AG04450 (cell line): ENCODE measurements at regions of chr22 and their contacts with region 1.

Region 1: GRCh38 chr22:35350539-35351503 is 30.1 kb upstream of the HMOX1 start:
- DNase-seq: peak; percentile 85
- H3K4me3 ChIP-seq: peak overlapping the region; percentile 67
- H3K27ac ChIP-seq: peak overlapping the region; percentile 48
- H3K27me3 ChIP-seq: no peaks in the 10 kb centered on the region
- CTCF ChIP-seq: peak; percentile 74

Region 2: GRCh38 chr22:35116817-35117216 is 234.0 kb before region 1 on chr22:
- CTCF ChIA-PET with region 1: no interaction called
- POLR2A ChIA-PET with region 1: no interaction called
- DNase-seq: no peak
- H3K4me3 ChIP-seq: no peak overlapping the region
- H3K27ac ChIP-seq: no peak overlapping the region
- H3K27me3 ChIP-seq: no peaks in the 10 kb centered on the region
- CTCF ChIP-seq: no peak

Region 3: GRCh38 chr22:35257321-35258190 is 93.3 kb before region 1 on chr22 and contains the start of gene HMGXB4:
- CTCF ChIA-PET with region 1: no interaction called
- POLR2A ChIA-PET with region 1: no interaction called
- DNase-seq: peak; percentile 73
- H3K4me3 ChIP-seq: peak within 1 kb of the TSS; percentile 78
- H3K27ac ChIP-seq: peak within 1 kb of the TSS; percentile 47
- H3K27me3 ChIP-seq: no peaks in the 10 kb centered on the region
- CTCF ChIP-seq: no peak
- polyA plus RNA-seq, gene HMGXB4: 22.1 and 30.4 TPM in 2 replicates

Region 4: DNA sequence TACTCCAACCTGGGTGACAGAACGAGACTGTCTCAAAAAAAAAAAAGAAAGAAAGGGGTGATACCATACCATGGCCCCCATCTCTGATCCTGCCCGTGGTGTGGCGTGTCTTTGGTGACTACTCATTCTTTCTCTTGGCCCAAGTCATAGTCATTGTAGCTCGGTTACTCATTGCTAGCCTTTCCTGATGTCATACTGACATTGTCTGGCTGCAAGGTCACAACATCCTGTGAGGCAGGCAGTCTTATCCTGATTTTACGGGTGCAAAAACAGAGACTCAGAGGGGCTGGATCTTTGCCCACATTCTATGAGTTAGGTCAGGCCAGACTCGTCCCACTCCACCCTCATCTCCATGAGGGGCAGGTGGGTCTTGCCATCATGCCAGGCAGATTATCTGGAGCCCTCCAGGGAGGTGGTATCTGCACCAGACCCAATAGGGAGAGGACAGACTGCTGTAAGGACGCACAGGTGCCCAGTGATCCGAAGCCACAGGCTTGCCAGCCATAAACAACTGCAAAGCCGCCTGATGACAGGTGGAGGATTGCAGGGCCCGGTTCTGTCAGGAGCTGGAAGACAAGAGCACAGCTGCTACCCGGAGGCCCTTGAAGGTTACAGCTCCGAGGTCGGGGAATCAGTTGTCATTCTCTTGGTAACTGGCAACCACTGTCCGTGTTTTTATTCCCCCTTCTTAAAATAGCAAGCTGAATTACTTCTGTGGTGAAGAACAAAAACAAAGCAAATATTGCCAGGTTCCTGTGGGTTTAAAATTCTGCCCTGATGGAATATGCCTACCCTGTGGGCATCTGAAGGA is 37.3 kb before region 1 on chr22:
- CTCF ChIA-PET with region 1: no interaction called
- POLR2A ChIA-PET with region 1: no interaction called
- DNase-seq: peak; percentile 26
- H3K4me3 ChIP-seq: no peak overlapping the region
- H3K27ac ChIP-seq: peak overlapping the region; percentile 52
- H3K27me3 ChIP-seq: no peaks in the 10 kb centered on the region
- CTCF ChIP-seq: no peak

Region 5: DNA sequence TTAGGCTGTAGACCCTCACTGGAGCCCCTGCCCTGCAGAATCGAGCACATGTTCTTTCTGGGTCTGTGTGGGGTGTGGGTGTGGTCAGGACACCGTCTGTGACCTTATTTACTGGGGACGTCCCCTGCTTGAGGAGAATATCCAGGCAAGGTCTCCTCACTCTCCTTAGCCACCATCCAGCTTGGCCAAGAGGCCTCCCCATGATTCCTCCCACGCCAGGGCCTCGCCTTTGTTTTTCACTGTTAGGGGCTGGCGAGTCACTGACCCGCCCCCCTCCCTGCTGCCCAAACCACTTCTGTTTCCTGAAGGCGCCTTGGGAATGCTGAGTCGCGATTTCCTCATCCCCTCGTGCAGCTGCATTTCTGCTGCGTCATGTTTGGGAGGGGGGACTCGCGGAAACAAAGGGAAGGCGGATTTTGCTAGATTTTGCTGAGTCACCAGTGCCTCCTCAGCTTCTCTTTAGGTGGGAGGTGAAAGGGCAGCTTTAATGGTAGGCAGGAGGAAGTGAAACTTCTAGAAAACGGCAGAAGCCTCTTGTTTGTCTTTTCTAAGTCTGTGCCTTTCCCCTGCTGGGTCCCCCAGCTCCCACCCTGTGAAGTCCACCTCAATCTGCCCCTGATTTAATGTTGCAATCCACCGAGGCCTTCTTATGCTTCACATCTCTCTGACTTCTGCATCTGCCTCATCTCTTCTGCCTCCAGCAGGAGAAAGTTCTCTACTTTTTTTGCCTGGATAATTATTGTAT is 26.1 kb after region 1 on chr22:
- CTCF ChIA-PET with region 1: no interaction called
- POLR2A ChIA-PET with region 1: interaction called, 20 read pairs
- DNase-seq: peak; percentile 97
- H3K4me3 ChIP-seq: no peak overlapping the region
- H3K27ac ChIP-seq: peak overlapping the region; percentile 94
- H3K27me3 ChIP-seq: no peaks in the 10 kb centered on the region
- CTCF ChIP-seq: no peak

Region 6: GRCh38 chr22:35437038-35437437 is 86.2 kb after region 1 on chr22:
- CTCF ChIA-PET with region 1: no interaction called
- POLR2A ChIA-PET with region 1: no interaction called
- DNase-seq: no peak
- H3K4me3 ChIP-seq: no peak overlapping the region
- H3K27ac ChIP-seq: no peak overlapping the region
- H3K27me3 ChIP-seq: no peaks in the 10 kb centered on the region
- CTCF ChIP-seq: no peak

Region 7: DNA sequence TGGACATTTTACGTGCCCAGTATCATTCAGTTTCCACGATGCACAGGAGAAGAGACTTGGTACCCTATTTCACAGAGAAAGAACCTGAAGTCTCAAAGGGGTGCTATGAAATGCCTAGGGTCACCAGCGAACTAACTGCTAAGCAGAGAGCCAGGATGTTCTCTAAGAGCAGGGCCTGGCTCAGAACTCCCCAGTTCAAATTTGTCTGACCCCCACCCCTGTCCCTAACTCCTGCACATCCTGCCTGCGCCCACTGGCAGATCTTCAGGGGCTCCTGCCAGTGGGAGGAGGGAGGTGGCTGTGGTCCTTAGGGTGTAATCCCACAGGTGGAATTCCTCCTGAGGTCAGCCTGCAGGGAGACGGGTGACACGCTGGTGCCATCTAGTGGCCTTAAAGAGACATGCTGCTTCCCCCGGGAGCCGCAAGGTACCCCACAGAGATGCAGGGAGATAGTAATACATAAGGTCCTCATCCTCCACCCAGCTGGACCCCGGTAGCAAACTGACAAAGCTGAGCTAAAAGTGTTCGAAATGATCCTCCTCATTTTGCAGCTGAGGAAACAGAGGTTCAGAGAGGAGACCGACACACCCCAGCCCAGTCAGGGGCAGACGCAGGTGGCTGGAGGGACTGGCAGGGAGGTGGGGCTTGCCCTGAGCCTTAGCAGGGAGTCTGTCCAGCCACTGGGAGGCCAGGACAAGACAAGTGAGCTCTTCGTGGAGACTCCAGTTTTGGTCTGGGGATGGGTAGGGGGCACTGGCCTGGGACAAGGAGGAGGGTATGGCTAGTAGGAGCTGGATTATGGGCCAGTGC is 232.2 kb after region 1 on chr22:
- CTCF ChIA-PET with region 1: interaction called, 27 read pairs
- POLR2A ChIA-PET with region 1: no interaction called
- DNase-seq: no peak
- H3K4me3 ChIP-seq: no peak overlapping the region
- H3K27ac ChIP-seq: no peak overlapping the region
- H3K27me3 ChIP-seq: no peaks in the 10 kb centered on the region
- CTCF ChIP-seq: peak; percentile 94

Region 8: DNA sequence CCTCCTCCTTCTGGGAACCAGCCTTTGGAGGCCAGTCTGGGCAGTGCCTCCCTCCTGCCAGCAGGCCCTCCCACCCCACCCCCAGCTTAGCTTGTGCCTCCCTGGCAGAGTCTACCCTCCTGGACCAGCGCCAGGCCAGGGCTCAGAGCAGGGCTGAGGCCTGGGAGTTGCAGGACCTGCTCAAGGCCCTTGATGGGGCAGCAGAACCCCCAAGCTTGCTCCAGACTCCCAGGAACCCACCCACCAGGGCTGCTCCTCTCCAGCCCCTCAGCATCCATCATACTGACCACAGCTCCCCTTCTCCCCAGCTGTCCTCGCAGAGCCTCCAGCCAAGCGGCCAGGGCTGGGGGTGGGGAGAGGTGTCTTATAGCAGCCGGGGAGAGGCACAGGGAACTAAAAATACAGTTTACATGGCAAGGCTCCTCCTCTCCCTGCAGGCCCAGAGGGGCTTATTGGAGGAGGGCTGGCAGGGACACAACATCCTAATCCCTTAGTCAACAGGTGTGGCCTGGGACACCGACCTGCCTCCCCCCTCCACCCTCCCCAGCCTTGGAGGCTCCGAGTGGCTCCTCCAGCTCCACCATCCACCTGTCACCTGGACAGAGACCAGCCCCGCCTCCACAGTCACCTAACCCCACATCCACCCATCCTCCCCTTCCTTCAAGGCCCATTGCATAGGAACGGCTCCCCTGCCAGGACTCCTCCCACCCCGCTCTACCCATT is 271.5 kb after region 1 on chr22:
- CTCF ChIA-PET with region 1: interaction called, 12 read pairs
- POLR2A ChIA-PET with region 1: no interaction called
- DNase-seq: no peak
- H3K4me3 ChIP-seq: no peak overlapping the region
- H3K27ac ChIP-seq: no peak overlapping the region
- H3K27me3 ChIP-seq: peaks cover 2% of the 10 kb centered on the region
- CTCF ChIP-seq: no peak